Activated CD4-positive, alpha-beta T cell treated with anti-CD3 and anti-CD28 coated beads for 36 hours (primary cell): ENCODE measurements at regions of chr20 and their contacts with region 1.

Region 1: DNA sequence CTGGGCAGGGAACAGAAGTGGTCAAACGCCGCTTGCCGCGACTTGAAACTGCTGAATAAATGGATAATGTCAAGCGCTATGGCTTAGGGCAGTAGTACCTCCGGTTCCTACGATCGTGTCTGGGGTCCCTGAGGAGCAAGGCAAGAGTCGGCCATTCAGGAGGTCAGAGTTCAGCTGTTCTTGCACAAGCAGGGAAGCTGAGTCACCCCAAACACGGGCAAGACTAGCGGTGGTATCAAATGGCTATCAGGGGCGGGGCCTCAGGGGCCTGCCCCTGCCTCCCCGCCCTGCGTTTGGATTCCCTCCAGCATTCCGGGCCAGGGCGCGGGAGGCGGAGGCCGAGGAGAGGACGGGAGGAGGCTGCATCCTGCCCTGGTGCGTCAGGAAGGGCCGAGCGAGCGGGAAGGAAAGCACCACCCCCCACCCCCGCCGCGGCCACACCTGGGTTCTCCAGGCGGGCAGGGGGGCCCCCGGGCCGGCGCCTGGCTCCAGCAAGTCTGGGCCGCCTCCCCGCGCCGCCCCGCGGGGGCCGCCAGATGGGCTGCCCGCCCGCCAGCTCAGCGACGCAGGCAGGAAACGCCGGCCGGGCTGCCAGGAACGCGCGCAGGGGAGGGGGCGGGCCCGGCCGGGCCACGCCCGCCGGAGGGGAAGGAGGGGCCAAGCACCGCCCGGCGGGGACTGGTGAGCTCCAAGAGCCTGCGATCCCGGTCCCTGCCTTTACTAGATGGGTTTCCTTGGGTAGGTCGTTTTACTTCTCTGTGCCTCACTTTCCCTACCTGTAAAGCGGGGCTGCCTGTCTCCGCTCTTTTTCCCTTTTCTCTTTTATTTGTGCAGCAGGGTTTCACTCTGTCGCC is 32.2 kb upstream of the ID1 start:
- DNase-seq: peak; percentile 94
- ATAC-seq: peak; percentile 85
- H3K4me3 Mint-ChIP-seq: peak overlapping the region; percentile 88
- H3K27ac Mint-ChIP-seq: peak overlapping the region; percentile 89
- H3K4me1 Mint-ChIP-seq: peaks cover 25% of the 10 kb centered on the region
- H3K27me3 Mint-ChIP-seq: no peaks in the 10 kb centered on the region

Region 2: GRCh38 chr20:31514159-31515071 is 58.5 kb before region 1 on chr20 and contains the start of gene HM13:
- CTCF ChIA-PET with region 1: interaction called, 3 read pairs
- POLR2A ChIA-PET with region 1: no interaction called
- intact Hi-C with region 1: loop called in 1 of 2 experiments (anchors 1 kb)
- DNase-seq: peak; percentile 93
- ATAC-seq: peak; percentile 79
- H3K4me3 Mint-ChIP-seq: no peak within 1 kb of the TSS
- H3K27ac Mint-ChIP-seq: peak within 1 kb of the TSS; percentile 58
- H3K4me1 Mint-ChIP-seq: peaks cover 6% of the 10 kb centered on the region
- H3K27me3 Mint-ChIP-seq: no peaks in the 10 kb centered on the region
- total RNA-seq, gene HM13: 108 to 111 TPM

Region 3: GRCh38 chr20:31547017-31547675 is 25.8 kb before region 1 on chr20:
- CTCF ChIA-PET with region 1: interaction called, 8 read pairs
- POLR2A ChIA-PET with region 1: no interaction called
- intact Hi-C with region 1: loop called in 1 of 2 experiments (anchors 2 kb)
- DNase-seq: peak; percentile 90
- ATAC-seq: peak; percentile 70
- H3K4me3 Mint-ChIP-seq: peak overlapping the region; percentile 89
- H3K27ac Mint-ChIP-seq: peak overlapping the region; percentile 96
- H3K4me1 Mint-ChIP-seq: peaks cover 28% of the 10 kb centered on the region
- H3K27me3 Mint-ChIP-seq: no peaks in the 10 kb centered on the region

Region 4: GRCh38 chr20:31560094-31560899 is 12.6 kb before region 1 on chr20:
- CTCF ChIA-PET with region 1: interaction called, 106 read pairs
- POLR2A ChIA-PET with region 1: interaction called, 5 read pairs
- intact Hi-C with region 1: no loop called
- DNase-seq: peak; percentile 91
- ATAC-seq: peak; percentile 78
- H3K4me3 Mint-ChIP-seq: no peak overlapping the region
- H3K27ac Mint-ChIP-seq: peak overlapping the region; percentile 85
- H3K4me1 Mint-ChIP-seq: peaks cover 16% of the 10 kb centered on the region
- H3K27me3 Mint-ChIP-seq: no peaks in the 10 kb centered on the region

Region 5: GRCh38 chr20:31605031-31605901 is 32.3 kb after region 1 on chr20 and contains the start of gene ID1:
- CTCF ChIA-PET with region 1: interaction called, 712 read pairs
- POLR2A ChIA-PET with region 1: interaction called, 13 read pairs
- intact Hi-C with region 1: loop called (anchors 1 kb)
- DNase-seq: peak; percentile 93
- ATAC-seq: peak; percentile 82
- H3K4me3 Mint-ChIP-seq: peak within 1 kb of the TSS; percentile 91
- H3K27ac Mint-ChIP-seq: peak within 1 kb of the TSS; percentile 73
- H3K4me1 Mint-ChIP-seq: peaks cover 26% of the 10 kb centered on the region
- H3K27me3 Mint-ChIP-seq: peaks cover 43% of the 10 kb centered on the region
- total RNA-seq, gene ID1: 2.2 to 3.5 TPM

Region 6: GRCh38 chr20:32062776-32063170 is 489.8 kb after region 1 on chr20:
- CTCF ChIA-PET with region 1: no interaction called
- POLR2A ChIA-PET with region 1: no interaction called
- intact Hi-C with region 1: no loop called
- DNase-seq: peak; percentile 26
- ATAC-seq: no peak
- H3K4me3 Mint-ChIP-seq: no peak overlapping the region
- H3K27ac Mint-ChIP-seq: no peak overlapping the region
- H3K4me1 Mint-ChIP-seq: peaks cover 7% of the 10 kb centered on the region
- H3K27me3 Mint-ChIP-seq: peaks cover 23% of the 10 kb centered on the region